ENCODE measurements at regions of chr11 and their contacts with region 1.

Region 1: GRCh38 chr11:27497284-27497866 is 9.2 kb downstream of the LIN7C start:
- DNase-seq: no peak
- H3K4me3 ChIP-seq: no peak overlapping the region
- CTCF ChIP-seq: no peak

Region 2: DNA sequence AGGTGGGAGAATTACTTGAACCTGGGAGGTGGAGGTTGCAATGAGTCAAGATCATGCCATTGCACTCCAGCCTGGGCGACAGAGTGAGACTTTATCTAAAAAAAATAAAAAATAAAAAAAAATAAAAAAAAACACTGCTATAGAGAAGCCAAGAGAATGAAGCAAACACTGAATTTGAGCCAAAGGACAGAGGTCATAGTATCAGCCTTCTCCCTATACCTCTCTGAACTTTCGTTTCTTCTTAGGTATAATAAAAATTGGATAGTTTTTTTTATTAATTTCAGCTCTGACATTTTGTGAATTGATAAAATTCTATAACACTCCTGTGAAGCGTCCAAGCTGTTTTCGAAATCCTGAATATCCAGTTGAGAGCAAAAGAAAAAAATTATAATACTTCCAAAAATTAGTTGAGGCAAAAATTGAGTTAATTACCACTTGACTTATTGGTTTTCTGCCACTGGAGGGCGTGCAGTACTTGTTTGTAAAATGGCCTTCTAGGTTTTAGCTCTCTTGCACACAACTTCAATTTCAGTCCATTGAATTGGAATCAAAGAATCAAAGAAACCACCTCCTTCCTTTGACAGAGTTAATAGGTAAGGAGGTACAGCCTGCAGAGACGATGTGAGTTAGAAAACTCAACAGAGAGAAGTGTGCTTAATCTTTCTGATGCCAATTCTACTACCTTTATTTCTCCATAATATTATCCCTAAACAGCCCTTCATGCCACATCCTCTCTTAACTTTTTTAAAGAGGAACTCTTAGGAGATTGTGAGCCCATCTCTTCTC is 313.5 kb before region 1 on chr11:
- CTCF ChIA-PET with region 1: interaction called, 99 read pairs
- POLR2A ChIA-PET with region 1: no interaction called
- DNase-seq: peak; percentile 38
- H3K4me3 ChIP-seq: no peak overlapping the region
- CTCF ChIP-seq: peak; percentile 47

Region 3: GRCh38 chr11:27201454-27202236 is 295.7 kb before region 1 on chr11:
- CTCF ChIA-PET with region 1: interaction called, 10 read pairs
- POLR2A ChIA-PET with region 1: no interaction called
- DNase-seq: no peak
- H3K4me3 ChIP-seq: no peak overlapping the region
- CTCF ChIP-seq: no peak

Region 4: DNA sequence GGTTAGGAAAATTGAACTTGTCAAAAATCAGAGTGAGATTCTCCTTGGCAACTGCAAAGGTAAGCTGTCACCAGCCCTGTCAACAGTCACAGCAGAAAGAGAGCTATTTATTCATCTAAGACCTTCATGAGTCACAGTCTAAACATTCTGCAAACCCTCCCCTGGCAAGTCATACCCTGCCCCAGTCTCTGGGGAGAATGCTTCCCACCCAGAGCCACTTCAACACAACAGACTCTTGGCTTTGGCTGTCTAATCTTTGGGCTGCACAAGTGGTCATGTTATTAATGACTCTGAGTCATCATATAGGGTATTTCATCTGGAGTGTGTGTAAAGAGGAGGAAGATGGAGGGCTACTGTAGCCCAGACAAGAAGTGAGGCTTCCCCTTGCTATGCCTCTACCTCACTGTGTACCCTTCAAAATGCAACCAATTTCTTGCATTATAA is 287.8 kb before region 1 on chr11:
- CTCF ChIA-PET with region 1: interaction called, 15 read pairs
- POLR2A ChIA-PET with region 1: no interaction called
- DNase-seq: peak; percentile 78
- H3K4me3 ChIP-seq: no peak overlapping the region
- CTCF ChIP-seq: no peak

Region 5: GRCh38 chr11:27472398-27473016 is 24.9 kb before region 1 on chr11 and contains the start of gene LGR4:
- CTCF ChIA-PET with region 1: interaction called, 22 read pairs
- POLR2A ChIA-PET with region 1: no interaction called
- DNase-seq: peak; percentile 72
- H3K4me3 ChIP-seq: peak within 1 kb of the TSS; percentile 75
- CTCF ChIP-seq: no peak

Region 6: DNA sequence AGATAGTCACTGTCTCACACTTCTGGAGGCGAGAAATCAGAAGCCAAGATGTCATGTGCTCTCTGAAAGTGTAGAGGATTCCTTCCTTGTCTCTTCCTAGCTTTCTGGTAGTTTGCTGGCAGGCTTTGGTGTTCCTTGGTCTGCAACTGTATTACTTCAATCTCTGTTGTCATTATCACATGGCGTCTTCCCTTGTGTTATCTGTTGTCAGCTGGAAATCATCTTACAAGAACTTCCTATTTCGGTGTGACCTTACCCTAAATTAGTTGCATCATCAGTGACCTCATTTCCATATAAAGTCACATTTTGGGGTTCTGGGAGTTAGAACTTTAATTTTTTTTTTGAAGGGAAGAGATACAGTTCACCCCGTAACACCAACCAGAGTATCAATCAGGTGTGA is 12.5 kb after region 1 on chr11:
- CTCF ChIA-PET with region 1: interaction called, 11 read pairs
- POLR2A ChIA-PET with region 1: no interaction called
- DNase-seq: no peak
- H3K4me3 ChIP-seq: no peak overlapping the region
- CTCF ChIP-seq: no peak